Panc1 (cell line): ENCODE measurements at regions of chr6 and their contacts with region 1.

Region 1: DNA sequence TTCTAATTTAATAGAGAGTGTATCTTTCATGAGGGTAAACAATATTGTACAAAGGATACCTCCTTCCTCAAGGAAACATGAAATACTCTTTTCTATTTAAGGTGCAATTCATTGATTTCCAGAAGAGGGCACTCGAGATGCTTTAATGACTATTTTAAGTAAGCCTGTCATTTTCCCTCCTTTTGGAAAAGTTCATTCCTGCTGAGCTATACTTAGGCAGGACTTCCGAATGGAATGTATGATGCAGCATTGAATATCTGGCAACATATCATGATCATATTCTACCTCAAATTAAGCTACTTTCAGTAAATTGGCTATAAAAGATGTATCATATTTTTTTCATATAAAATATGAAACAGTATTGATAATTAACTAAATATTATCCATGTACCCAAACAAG is 5.0 kb downstream of the DST start:
- DNase-seq: peak; percentile 75
- ATAC-seq: peak; percentile 86
- H3K4me3 ChIP-seq: no peak overlapping the region
- H3K27ac ChIP-seq: no peak overlapping the region
- H3K4me1 ChIP-seq: no peaks in the 10 kb centered on the region; the same call in 1 of the 2 replicates
- H3K27me3 ChIP-seq: no peaks in the 10 kb centered on the region
- CTCF ChIP-seq: peak; percentile 79; the same call in 1 of the 2 replicates

Region 2: DNA sequence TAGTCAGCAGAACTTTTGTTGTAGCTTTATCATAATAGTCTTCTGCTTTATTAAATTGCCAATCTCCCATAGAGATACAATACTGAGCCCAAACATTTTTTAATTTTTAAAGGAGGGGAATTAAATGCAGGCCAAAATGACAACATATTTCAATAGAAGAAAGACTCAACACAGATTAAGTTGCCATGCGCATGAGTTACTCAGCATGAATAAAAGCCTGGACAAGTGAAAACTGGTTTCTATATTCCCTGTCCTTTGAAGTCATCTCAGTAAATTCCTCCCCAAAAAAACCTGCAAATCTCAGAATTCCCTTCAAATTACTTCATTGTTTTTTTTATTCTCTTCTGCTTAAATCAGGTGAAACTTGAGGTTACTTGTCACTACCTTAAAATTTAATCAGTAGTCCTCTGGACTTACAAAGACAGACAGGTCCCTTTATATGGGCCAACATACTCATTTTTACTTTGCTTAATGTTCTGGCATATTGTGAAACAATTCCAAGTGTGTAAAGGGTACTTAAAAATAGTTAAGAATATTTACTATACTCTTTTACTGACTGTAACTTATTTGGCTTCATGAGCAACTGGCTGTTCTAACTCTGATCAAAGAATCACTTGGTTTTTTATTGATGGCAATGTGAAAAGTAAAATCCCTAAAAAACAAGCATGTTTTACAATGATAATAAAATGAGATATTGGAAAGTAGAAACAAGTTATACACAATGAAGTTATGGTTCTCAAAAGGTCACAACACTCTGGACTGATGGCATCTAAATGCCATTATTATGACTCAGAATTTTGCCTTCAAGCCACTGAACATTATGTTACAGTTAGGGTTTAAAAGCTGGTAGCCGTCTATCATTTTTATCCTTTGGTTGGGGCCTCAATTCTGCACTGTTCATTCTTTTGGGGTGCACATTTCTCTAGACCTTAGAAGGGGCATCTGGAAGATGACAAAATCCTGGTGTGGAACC is 340.3 kb before region 1 on chr6:
- CTCF ChIA-PET with region 1: no interaction called
- POLR2A ChIA-PET with region 1: no interaction called
- in situ Hi-C with region 1: no loop called
- intact Hi-C with region 1: no loop called
- DNase-seq: no peak
- ATAC-seq: no peak
- H3K4me3 ChIP-seq: no peak overlapping the region
- H3K27ac ChIP-seq: no peak overlapping the region; the same call in 1 of the 2 replicates
- H3K4me1 ChIP-seq: peaks cover 7% of the 10 kb centered on the region; the same call in 1 of the 2 replicates
- H3K27me3 ChIP-seq: no peaks in the 10 kb centered on the region
- CTCF ChIP-seq: no peak

Region 3: GRCh38 chr6:56699066-56699654 is 61.5 kb after region 1 on chr6:
- CTCF ChIA-PET with region 1: no interaction called
- POLR2A ChIA-PET with region 1: no interaction called
- in situ Hi-C with region 1: no loop called
- intact Hi-C with region 1: loop called (anchors 2 kb)
- DNase-seq: no peak
- ATAC-seq: no peak
- H3K4me3 ChIP-seq: no peak overlapping the region
- H3K27ac ChIP-seq: no peak overlapping the region
- H3K4me1 ChIP-seq: peaks cover 4% of the 10 kb centered on the region; the same call in 1 of the 2 replicates
- H3K27me3 ChIP-seq: no peaks in the 10 kb centered on the region
- CTCF ChIP-seq: peak; percentile 67; the same call in 1 of the 2 replicates

Region 4: DNA sequence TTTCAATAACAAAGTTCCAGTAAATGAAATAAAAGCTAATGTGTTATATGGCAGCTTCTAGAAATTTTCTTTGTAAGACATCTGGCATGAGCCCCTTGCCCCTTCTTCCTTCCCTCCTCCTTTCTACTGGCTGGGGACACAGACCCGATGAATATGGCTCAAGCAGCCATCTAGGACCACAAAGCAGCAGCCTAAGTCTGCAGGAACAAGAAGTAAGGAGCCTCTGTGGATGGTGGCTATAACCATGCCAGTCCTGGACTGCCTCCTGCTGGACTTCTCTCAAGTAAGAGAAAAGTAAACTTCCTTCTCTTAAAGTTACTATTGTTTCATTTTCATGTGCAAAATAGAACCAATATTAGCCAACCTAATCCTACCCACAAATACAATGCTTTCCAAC is 119.9 kb after region 1 on chr6:
- CTCF ChIA-PET with region 1: interaction called, 3 read pairs
- POLR2A ChIA-PET with region 1: no interaction called
- in situ Hi-C with region 1: no loop called
- intact Hi-C with region 1: loop called (anchors 5 kb)
- DNase-seq: peak; percentile 67
- ATAC-seq: peak; percentile 75
- H3K4me3 ChIP-seq: no peak overlapping the region
- H3K27ac ChIP-seq: peak overlapping the region; percentile 83
- H3K4me1 ChIP-seq: peaks cover 77% of the 10 kb centered on the region
- H3K27me3 ChIP-seq: no peaks in the 10 kb centered on the region
- CTCF ChIP-seq: peak; percentile 85